ENCODE measurements at regions of chr15 and their contacts with region 1.

Region 1: DNA sequence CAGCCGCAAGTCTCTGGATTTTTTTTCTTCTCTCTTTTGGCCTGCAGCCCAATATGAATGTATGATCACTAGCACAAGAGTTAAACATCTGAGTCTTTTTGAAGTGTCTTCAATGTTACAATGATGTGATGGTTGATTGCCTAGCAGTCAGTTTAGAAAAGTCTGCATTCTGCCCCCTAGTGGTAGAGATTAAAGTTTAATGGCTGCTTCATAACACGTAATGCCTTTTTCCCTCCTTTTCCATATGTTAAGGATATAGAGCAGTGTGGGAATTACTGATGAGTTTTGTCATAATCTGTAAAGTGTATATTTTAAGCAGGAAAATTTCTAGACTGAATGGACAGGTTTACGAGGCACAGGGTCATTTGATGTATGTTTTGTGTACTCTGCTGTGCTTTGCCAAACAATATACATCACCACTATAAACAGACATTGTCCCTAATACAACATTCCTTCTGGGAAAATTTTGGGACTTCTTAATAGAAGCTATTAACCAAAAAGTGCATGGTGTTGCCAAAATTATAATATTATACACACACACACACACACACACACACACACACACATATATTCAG is 1038.5 kb upstream of the NR2F2 start:
- DNase-seq: peak; percentile 25
- H3K4me3 Mint-ChIP-seq: no peak overlapping the region
- H3K27ac Mint-ChIP-seq: no peak overlapping the region
- H3K4me1 Mint-ChIP-seq: peaks cover 19% of the 10 kb centered on the region
- H3K27me3 Mint-ChIP-seq: no peaks in the 10 kb centered on the region
- CTCF ChIP-seq: peak; percentile 54

Region 2: DNA sequence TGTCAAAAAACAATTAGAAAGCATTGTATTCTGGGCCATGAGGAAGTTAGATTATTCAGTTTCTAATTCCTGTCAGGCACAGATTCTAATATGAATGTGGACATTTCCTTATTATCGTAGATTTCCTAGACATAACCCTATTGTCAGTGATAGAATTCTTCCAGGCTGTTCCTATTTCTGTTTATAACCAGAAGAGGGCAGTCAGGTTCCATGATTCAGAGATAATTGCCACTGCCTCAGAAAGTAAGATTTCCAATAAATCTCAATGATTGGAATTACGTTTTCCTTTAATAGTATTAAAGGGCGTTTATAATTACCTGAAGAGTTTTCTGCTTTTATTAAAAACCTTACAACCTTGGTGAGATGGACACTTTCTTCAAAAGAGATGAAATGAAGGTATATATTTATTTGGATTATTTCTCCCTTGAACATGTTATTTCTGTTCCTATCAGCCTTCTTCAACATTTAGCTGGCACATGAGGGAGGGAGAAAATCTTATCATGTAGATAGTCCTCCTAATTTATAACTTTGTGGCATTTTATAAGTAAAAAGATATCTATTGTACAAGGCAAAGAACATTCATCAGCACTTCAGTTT is 621.4 kb before region 1 on chr15:
- CTCF ChIA-PET with region 1: no interaction called
- intact Hi-C with region 1: loop called (anchors 2 kb)
- DNase-seq: no peak
- H3K4me3 Mint-ChIP-seq: no peak overlapping the region
- H3K27ac Mint-ChIP-seq: no peak overlapping the region
- H3K4me1 Mint-ChIP-seq: no peaks in the 10 kb centered on the region
- H3K27me3 Mint-ChIP-seq: peaks cover 17% of the 10 kb centered on the region
- CTCF ChIP-seq: peak; percentile 64

Region 3: GRCh38 chr15:95025924-95026728 is 265.9 kb before region 1 on chr15:
- CTCF ChIA-PET with region 1: no interaction called
- intact Hi-C with region 1: loop called (anchors 1 kb)
- DNase-seq: peak; percentile 78
- H3K4me3 Mint-ChIP-seq: no peak overlapping the region
- H3K27ac Mint-ChIP-seq: no peak overlapping the region
- H3K4me1 Mint-ChIP-seq: peaks cover 7% of the 10 kb centered on the region
- H3K27me3 Mint-ChIP-seq: no peaks in the 10 kb centered on the region
- CTCF ChIP-seq: peak; percentile 75

Region 4: GRCh38 chr15:95174301-95175262 is 117.4 kb before region 1 on chr15:
- CTCF ChIA-PET with region 1: no interaction called
- intact Hi-C with region 1: loop called (anchors 5 kb)
- DNase-seq: no peak
- H3K4me3 Mint-ChIP-seq: no peak overlapping the region
- H3K27ac Mint-ChIP-seq: no peak overlapping the region
- H3K4me1 Mint-ChIP-seq: peaks cover 13% of the 10 kb centered on the region
- H3K27me3 Mint-ChIP-seq: no peaks in the 10 kb centered on the region
- CTCF ChIP-seq: no peak

Region 5: DNA sequence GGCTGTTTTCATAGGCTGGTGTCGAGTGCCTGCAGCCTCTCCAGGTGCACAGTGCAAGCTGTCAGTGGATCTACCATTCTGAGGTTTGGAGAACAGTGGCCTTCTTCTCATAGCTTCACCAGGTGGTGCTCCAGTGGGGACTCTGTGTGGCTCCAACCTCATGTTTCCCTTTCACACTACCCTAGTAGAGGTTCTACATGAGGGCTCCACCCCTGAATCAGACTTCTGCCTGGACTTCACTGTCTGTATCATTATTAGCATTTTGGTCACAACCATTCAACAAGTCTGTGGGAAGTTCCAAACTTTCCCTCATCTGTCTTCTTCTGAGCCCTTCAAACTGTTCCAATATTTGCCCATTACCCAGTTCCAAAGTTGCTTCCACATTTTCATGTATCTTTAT is 57.0 kb before region 1 on chr15:
- CTCF ChIA-PET with region 1: no interaction called
- intact Hi-C with region 1: no loop called
- DNase-seq: no peak
- H3K4me3 Mint-ChIP-seq: no peak overlapping the region
- H3K27ac Mint-ChIP-seq: no peak overlapping the region
- H3K4me1 Mint-ChIP-seq: no peaks in the 10 kb centered on the region
- H3K27me3 Mint-ChIP-seq: no peaks in the 10 kb centered on the region
- CTCF ChIP-seq: no peak

Region 6: GRCh38 chr15:95259513-95259912 is 32.5 kb before region 1 on chr15:
- CTCF ChIA-PET with region 1: no interaction called
- intact Hi-C with region 1: loop called (anchors 2 kb)
- DNase-seq: peak; percentile 78
- H3K4me3 Mint-ChIP-seq: peak overlapping the region; percentile 15
- H3K27ac Mint-ChIP-seq: no peak overlapping the region
- H3K4me1 Mint-ChIP-seq: peaks cover 26% of the 10 kb centered on the region
- H3K27me3 Mint-ChIP-seq: no peaks in the 10 kb centered on the region
- CTCF ChIP-seq: peak; percentile 85

Region 7: DNA sequence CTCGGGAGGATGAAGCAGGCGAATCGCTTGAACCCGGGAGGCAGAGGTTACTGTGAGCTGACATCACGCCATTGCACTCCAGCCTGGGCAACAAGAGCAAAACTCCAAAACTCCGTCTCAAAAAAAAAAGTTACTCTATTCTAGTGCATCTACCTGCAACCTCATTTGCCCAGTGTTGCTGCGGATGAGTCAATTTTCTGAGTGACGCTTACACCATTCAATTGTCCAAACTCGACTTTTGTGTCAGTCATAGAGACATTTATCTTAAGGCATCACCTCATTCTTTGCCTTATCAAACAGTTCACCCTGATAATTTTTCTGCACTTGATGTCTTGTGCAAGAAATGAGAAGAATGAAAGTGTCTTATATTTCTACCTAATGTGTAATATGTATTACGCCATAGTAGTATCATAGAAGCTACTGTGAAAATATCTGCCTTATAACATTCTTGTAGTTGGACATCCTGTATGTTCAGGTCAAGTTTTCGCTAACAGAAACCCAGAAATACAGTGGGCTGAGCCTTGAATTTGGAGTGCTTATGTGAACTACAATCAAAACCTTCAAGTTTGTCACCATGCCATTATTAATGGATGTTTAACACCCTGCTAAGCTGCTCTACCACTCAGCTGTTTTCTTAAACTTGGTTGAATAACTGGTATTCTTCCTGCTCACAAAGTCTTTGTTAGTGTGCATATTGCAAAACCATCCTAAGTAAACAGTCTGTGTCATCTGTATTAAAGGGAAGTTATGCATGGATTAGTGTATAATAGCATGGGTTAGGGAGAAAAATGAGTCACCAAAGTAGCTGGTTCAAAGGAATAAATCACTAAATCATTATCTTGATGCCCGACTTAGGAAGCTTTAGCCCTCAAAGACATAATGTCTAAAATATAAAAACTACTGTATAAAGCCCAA is 507.6 kb after region 1 on chr15:
- CTCF ChIA-PET with region 1: no interaction called
- intact Hi-C with region 1: loop called (anchors 10 kb)
- DNase-seq: no peak
- H3K4me3 Mint-ChIP-seq: no peak overlapping the region
- H3K27ac Mint-ChIP-seq: no peak overlapping the region
- H3K4me1 Mint-ChIP-seq: peaks cover 21% of the 10 kb centered on the region
- H3K27me3 Mint-ChIP-seq: no peaks in the 10 kb centered on the region
- CTCF ChIP-seq: no peak